Uterus (tissue), 4 donors: ENCODE measurements at regions of chr11 and their contacts with region 1.

Region 1: GRCh38 chr11:77047007-77047927 is 13.1 kb downstream of the B3GNT6 start:
- DNase-seq: peak; percentile 74 to 93
- H3K4me3 ChIP-seq: peak overlapping the region; percentile 16 to 33
- H3K27ac ChIP-seq: peak overlapping the region in 1 of 2 donors; percentile 21
- H3K4me1 ChIP-seq: peaks cover 0 to 3% of the 10 kb centered on the region in 2 donors
- H3K27me3 ChIP-seq: no peaks in the 10 kb centered on the region
- CTCF ChIP-seq: peak; percentile 68 to 89 (median 81)
- POLR2A ChIP-seq: no peak

Region 2: GRCh38 chr11:76997512-76997911 is 49.8 kb before region 1 on chr11:
- intact Hi-C with region 1: no loop called
- DNase-seq: no peak
- H3K4me3 ChIP-seq: no peak overlapping the region
- H3K27ac ChIP-seq: no peak overlapping the region
- H3K4me1 ChIP-seq: no peaks in the 10 kb centered on the region
- H3K27me3 ChIP-seq: no peaks in the 10 kb centered on the region
- CTCF ChIP-seq: no peak
- POLR2A ChIP-seq: no peak

Region 3: DNA sequence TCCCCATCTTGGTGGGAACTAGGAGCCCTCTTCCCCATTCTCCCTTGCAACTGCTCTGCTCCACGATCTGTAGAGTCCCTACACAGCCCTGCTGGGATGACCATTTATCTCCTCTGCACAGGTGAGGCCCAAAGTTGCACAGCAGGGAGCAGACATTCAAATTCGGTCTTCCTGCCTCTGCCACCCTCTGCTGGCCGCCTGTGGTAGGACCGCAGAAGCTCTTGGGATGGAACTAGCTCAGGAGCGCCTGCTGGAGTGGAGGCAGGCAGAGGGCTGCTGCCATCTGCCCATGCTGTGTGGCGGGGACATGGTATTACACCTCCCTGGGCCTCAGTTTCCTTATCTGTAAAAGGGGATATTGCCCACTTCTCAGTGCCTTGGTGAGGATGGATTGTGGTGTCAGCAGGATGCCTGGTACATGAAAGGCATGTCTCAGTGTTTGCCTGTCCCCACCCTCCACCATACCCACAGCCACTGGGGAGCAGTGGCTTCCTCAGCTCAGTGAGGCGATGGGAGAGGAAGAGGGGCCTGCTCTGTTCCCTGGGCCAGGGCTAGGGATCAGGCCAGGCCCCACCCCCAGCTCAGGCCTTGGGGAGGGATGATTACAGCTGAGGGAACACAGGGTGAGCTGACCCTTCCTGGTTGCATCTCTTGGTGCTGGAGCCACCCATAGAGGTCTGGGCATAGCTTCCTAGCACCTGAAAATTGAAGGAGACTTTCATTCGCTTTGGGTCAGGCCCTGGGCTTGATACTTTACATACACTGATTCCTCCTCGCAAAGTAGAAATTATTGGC is 44.1 kb after region 1 on chr11:
- intact Hi-C with region 1: loop called (anchors 5 kb)
- DNase-seq: peak; percentile 80 to 81
- H3K4me3 ChIP-seq: no peak overlapping the region
- H3K27ac ChIP-seq: no peak overlapping the region
- H3K4me1 ChIP-seq: no peaks in the 10 kb centered on the region
- H3K27me3 ChIP-seq: no peaks in the 10 kb centered on the region
- CTCF ChIP-seq: peak; percentile 90 to 98 (median 95)
- POLR2A ChIP-seq: no peak

Region 4: GRCh38 chr11:77113382-77114088 is 66.3 kb after region 1 on chr11:
- intact Hi-C with region 1: no loop called
- DNase-seq: no peak
- H3K4me3 ChIP-seq: no peak overlapping the region
- H3K27ac ChIP-seq: no peak overlapping the region
- H3K4me1 ChIP-seq: no peaks in the 10 kb centered on the region
- H3K27me3 ChIP-seq: no peaks in the 10 kb centered on the region
- CTCF ChIP-seq: peak in 1 of 4 experiments; percentile 22
- POLR2A ChIP-seq: no peak

Region 5: GRCh38 chr11:77155082-77155475 is 107.8 kb after region 1 on chr11:
- intact Hi-C with region 1: no loop called
- DNase-seq: no peak
- H3K4me3 ChIP-seq: no peak overlapping the region
- H3K27ac ChIP-seq: no peak overlapping the region
- H3K4me1 ChIP-seq: no peaks in the 10 kb centered on the region
- H3K27me3 ChIP-seq: no peaks in the 10 kb centered on the region
- CTCF ChIP-seq: no peak
- POLR2A ChIP-seq: no peak